PC-9 (cell line): ENCODE measurements at regions of chr2 and their contacts with region 1.

Region 1: GRCh38 chr2:54704688-54705605 is 18.5 kb upstream of the EML6 start:
- DNase-seq: peak in 1 of 2 experiments; percentile 52
- H3K4me3 ChIP-seq: no peak overlapping the region
- H3K27ac ChIP-seq: no peak overlapping the region
- H3K4me1 ChIP-seq: no peaks in the 10 kb centered on the region
- H3K27me3 ChIP-seq: no peaks in the 10 kb centered on the region
- CTCF ChIP-seq: peak; percentile 91

Region 2: GRCh38 chr2:53903011-53903410 is 801.9 kb before region 1 on chr2:
- CTCF ChIA-PET with region 1: no interaction called
- POLR2A ChIA-PET with region 1: no interaction called
- intact Hi-C with region 1: loop called (anchors 10 kb)
- DNase-seq: no peak
- H3K4me3 ChIP-seq: no peak overlapping the region
- H3K27ac ChIP-seq: no peak overlapping the region
- H3K4me1 ChIP-seq: no peaks in the 10 kb centered on the region
- H3K27me3 ChIP-seq: no peaks in the 10 kb centered on the region
- CTCF ChIP-seq: no peak

Region 3: GRCh38 chr2:54106631-54107454 is 598.1 kb before region 1 on chr2:
- CTCF ChIA-PET with region 1: interaction called, 11 read pairs
- POLR2A ChIA-PET with region 1: no interaction called
- intact Hi-C with region 1: loop called (anchors 1 kb)
- DNase-seq: peak; percentile 51 to 63
- H3K4me3 ChIP-seq: no peak overlapping the region
- H3K27ac ChIP-seq: no peak overlapping the region
- H3K4me1 ChIP-seq: peaks cover 21% of the 10 kb centered on the region
- H3K27me3 ChIP-seq: no peaks in the 10 kb centered on the region
- CTCF ChIP-seq: peak; percentile 88

Region 4: GRCh38 chr2:54665436-54665856 is 39.5 kb before region 1 on chr2:
- CTCF ChIA-PET with region 1: interaction called, 25 read pairs
- POLR2A ChIA-PET with region 1: no interaction called
- intact Hi-C with region 1: loop called (anchors 2 kb)
- DNase-seq: peak in 1 of 2 experiments; percentile 34
- H3K4me3 ChIP-seq: no peak overlapping the region
- H3K27ac ChIP-seq: no peak overlapping the region
- H3K4me1 ChIP-seq: peaks cover 8% of the 10 kb centered on the region; the same call in 1 of the 2 replicates
- H3K27me3 ChIP-seq: no peaks in the 10 kb centered on the region
- CTCF ChIP-seq: peak; percentile 76

Region 5: DNA sequence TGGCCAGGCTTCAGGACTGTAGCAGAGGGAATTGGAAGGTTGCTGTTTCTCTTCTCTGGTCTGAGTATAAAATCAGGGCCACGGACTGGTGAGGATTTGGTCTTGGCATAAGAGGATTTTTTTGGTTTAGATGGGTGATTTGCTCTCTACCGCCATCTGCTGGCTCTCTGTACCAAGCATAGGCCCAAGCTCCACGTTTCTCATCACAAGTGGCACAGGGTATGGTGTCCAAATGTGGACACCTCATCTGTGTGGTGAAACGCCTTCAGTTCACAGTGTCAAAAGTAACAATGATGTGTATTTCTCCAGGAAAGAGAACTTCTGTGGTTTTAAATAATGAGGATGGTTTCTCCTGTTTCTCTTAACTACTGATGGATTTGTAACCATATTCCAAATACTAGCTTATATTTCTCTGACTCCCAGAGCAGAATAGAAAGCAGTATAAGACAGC is 133.7 kb after region 1 on chr2:
- CTCF ChIA-PET with region 1: interaction called, 11 read pairs
- POLR2A ChIA-PET with region 1: no interaction called
- intact Hi-C with region 1: no loop called
- DNase-seq: peak; percentile 50 to 63
- H3K4me3 ChIP-seq: no peak overlapping the region
- H3K27ac ChIP-seq: no peak overlapping the region
- H3K4me1 ChIP-seq: no peaks in the 10 kb centered on the region
- H3K27me3 ChIP-seq: no peaks in the 10 kb centered on the region
- CTCF ChIP-seq: peak; percentile 98